ENCODE measurements at regions of chr9 and their contacts with region 1.

Region 1: GRCh38 chr9:96667361-96667728 is 12.2 kb upstream of the PRXL2C start:
- DNase-seq: no peak
- ATAC-seq: no peak
- H3K4me3 ChIP-seq: no peak overlapping the region
- H3K27ac ChIP-seq: no peak overlapping the region
- H3K4me1 ChIP-seq: no peaks in the 10 kb centered on the region
- H3K27me3 ChIP-seq: no peaks in the 10 kb centered on the region
- CTCF ChIP-seq: no peak

Region 2: DNA sequence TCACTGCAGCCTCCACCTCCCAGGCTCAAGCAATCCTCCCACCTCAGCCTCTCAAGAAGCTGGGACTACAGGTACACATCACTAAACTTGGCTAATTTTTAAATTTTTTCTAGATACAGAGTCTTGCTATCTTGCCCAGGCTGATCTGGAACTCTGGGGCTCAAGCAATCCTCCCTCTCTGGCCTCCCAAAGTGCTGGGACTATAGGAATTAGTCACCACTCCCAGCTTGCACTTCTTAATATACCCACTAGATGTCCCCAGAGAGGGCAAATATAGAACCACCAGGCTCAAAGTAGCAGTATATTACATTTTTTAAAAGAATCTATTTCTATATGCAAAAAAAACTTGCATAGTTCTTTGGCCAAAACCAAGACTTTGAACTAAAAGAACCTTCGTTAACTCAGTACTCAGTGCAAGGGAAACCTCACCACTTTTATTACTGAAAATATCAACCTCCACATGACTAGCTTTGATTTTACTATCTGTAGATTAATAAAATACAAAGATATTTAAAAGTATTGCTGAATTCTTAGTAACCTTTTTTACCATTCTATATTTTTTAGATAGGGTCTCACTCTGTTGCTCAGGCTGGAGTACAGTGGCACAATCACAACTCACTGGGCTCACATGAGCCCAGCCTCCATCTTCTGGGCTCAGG is 339.5 kb before region 1 on chr9:
- intact Hi-C with region 1: loop called (anchors 5 kb)
- DNase-seq: no peak
- ATAC-seq: peak in 3 of 4 donors; percentile 69 to 75 (median 71)
- H3K4me3 ChIP-seq: no peak overlapping the region
- H3K27ac ChIP-seq: no peak overlapping the region
- H3K4me1 ChIP-seq: no peaks in the 10 kb centered on the region
- H3K27me3 ChIP-seq: no peaks in the 10 kb centered on the region
- CTCF ChIP-seq: peak; percentile 78

Region 3: GRCh38 chr9:96441798-96442445 is 225.4 kb before region 1 on chr9:
- intact Hi-C with region 1: loop called (anchors 2 kb)
- DNase-seq: no peak
- ATAC-seq: peak; percentile 68 to 92 (median 80)
- H3K4me3 ChIP-seq: no peak overlapping the region
- H3K27ac ChIP-seq: no peak overlapping the region
- H3K4me1 ChIP-seq: no peaks in the 10 kb centered on the region
- H3K27me3 ChIP-seq: no peaks in the 10 kb centered on the region
- CTCF ChIP-seq: peak; percentile 79

Region 4: GRCh38 chr9:96478829-96479371 is 188.4 kb before region 1 on chr9:
- intact Hi-C with region 1: no loop called
- DNase-seq: no peak
- ATAC-seq: no peak
- H3K4me3 ChIP-seq: no peak overlapping the region
- H3K27ac ChIP-seq: no peak overlapping the region
- H3K4me1 ChIP-seq: no peaks in the 10 kb centered on the region
- H3K27me3 ChIP-seq: no peaks in the 10 kb centered on the region
- CTCF ChIP-seq: no peak

Region 5: GRCh38 chr9:96566498-96567207 is 100.7 kb before region 1 on chr9:
- intact Hi-C with region 1: loop called in 1 of 2 experiments (anchors 5 kb)
- DNase-seq: peak; percentile 80 to 88
- ATAC-seq: peak; percentile 79 to 96 (median 89)
- H3K4me3 ChIP-seq: peak overlapping the region; percentile 80
- H3K27ac ChIP-seq: peak overlapping the region; percentile 71
- H3K4me1 ChIP-seq: peaks cover 7% of the 10 kb centered on the region
- H3K27me3 ChIP-seq: no peaks in the 10 kb centered on the region
- CTCF ChIP-seq: peak; percentile 57

Measured in psoas muscle (tissue), 8 donors.